ENCODE measurements at regions of chr12 and their contacts with region 1.

Region 1: GRCh38 chr12:54431911-54432814 is 13.1 kb upstream of the ITGA5 start:
- DNase-seq: no peak
- H3K4me3 ChIP-seq: no peak overlapping the region
- H3K27ac ChIP-seq: no peak overlapping the region
- H3K4me1 ChIP-seq: peaks cover 0 to 10% of the 10 kb centered on the region in 2 experiments; a peak in 2 of 4 replicates
- H3K27me3 ChIP-seq: no peaks in the 10 kb centered on the region
- CTCF ChIP-seq: no peak
- EP300 ChIP-seq: no peak
- RAD21 ChIP-seq: no peak

Region 2: DNA sequence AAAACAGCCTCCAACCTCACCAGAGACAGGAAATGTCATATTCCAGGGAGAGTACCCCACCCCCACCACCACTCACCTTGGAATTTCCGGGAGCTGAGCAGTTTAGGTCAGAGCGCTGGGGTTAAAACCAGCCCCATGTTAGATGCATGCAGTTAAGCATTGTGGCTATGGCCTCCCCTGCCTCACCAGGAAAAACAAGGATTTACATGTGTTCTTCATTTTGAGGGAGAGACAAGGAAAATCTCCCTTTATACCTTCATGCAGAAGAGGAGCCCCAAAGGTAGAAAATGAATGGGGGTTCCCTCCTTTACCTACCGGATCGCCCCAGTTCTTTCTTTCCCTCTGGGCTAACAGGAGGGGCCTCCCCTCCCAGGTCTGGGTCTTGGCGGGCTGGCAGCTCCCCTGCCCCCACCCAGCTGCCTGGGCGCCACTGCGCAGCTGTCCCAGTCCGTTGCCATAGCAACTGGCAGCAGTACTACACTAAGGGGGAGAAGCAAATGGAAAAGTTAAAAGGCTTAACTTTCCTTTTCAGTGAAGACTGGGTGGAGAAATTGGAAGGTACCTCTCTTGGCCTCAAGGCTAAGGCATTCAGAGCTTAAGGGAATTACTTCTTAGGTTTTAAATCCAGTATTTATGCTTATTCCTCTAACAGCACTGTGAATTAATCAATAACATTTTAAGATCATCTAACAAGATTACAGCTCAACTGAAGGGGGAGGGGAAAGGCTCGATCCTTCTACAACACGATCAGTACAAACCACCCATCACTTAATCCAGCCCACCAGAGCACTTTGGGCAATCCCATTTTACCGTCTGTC is 172.8 kb before region 1 on chr12:
- CTCF ChIA-PET with region 1: no interaction called
- POLR2A ChIA-PET with region 1: no interaction called
- DNase-seq: peak; percentile 90
- H3K4me3 ChIP-seq: peak overlapping the region; percentile 40 to 52
- H3K27ac ChIP-seq: peak overlapping the region; percentile 98 to 99
- H3K4me1 ChIP-seq: peaks cover 22 to 55% of the 10 kb centered on the region in 2 experiments
- H3K27me3 ChIP-seq: no peaks in the 10 kb centered on the region
- CTCF ChIP-seq: no peak
- EP300 ChIP-seq: peak in 1 of 2 experiments; percentile 71; a peak in 3 of 4 replicates
- RAD21 ChIP-seq: 0 out of 2 replicates have a peak, but pooled peaks have one; percentile 4

Region 3: DNA sequence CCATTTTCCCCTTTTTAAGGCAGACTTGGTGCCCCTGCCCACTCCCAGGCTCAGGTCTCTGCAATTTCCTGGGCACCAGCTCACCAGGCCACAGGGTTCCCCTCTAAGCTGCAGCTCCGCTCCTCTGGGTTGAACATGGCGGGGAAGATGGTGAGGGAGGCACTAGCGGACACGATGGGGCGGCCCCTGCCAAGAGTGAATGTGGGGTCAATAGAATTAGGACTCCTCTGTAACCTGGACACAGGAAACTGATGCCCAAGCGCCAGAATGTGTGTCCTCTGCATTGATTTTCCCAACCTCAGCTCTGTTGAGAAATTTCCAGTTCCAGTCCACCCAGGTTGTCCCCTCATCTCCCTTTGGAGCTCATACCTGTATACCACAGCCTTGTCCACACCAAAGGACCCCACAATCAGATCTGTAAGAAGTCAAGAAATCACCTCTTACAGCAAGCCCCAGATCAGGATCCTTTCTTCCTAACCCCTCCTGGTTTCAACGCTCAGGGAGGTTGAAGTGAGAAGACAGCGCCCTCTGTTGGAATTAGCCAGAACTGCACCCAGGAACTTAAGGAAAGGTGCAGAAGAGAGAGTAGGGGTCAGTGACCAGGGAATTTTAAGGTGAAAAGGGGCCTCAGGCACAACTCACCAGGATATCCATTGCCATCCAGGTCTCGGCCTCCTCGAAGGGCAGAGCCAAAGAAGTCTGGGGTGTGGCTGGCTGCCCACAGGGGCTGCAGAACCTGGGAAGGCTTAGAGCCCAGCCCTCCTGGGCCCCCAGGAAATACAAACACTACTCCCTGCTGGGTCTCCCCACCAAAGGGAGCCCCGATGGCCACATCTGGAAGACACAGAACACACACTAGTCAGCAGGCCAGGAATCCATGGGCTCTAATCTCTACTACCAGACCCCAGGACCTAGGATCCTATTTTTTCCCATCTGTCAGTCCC is 27.8 kb before region 1 on chr12:
- CTCF ChIA-PET with region 1: interaction called, 490 read pairs
- POLR2A ChIA-PET with region 1: no interaction called
- DNase-seq: peak; percentile 64
- H3K4me3 ChIP-seq: peak overlapping the region in 1 of 2 experiments; percentile 18; a peak in 1 of 4 replicates
- H3K27ac ChIP-seq: no peak overlapping the region
- H3K4me1 ChIP-seq: no peaks in the 10 kb centered on the region
- H3K27me3 ChIP-seq: no peaks in the 10 kb centered on the region
- CTCF ChIP-seq: peak; percentile 98
- EP300 ChIP-seq: no peak
- RAD21 ChIP-seq: peak; percentile 23

Region 4: DNA sequence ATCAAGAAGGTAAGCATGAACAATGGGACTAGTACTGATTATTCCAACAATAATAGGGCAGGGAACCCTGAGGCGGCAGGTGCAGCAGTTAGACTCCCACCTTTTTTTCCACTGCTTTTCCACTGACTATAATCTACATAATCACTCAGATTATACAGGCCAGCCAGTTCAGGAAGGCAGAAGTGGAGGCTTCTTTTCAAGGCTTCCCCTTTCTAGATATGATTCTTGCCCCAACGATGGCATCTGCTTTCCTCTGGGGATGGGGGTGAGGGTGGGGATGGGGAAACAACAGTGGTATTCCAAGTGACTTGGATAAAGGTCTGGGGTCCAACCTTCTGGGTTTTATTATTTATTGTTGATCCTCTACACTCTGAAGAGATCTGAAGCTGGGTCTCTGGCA is 65.7 kb after region 1 on chr12:
- CTCF ChIA-PET with region 1: no interaction called
- POLR2A ChIA-PET with region 1: no interaction called
- DNase-seq: no peak
- H3K4me3 ChIP-seq: no peak overlapping the region
- H3K27ac ChIP-seq: no peak overlapping the region
- H3K4me1 ChIP-seq: no peaks in the 10 kb centered on the region
- H3K27me3 ChIP-seq: peaks cover 12% of the 10 kb centered on the region; the same call in 1 of the 2 replicates
- CTCF ChIP-seq: no peak
- EP300 ChIP-seq: no peak
- RAD21 ChIP-seq: no peak

Measured in SK-N-SH (cell line).